ENCODE measurements at regions of chr2 and their contacts with region 1.

Region 1: DNA sequence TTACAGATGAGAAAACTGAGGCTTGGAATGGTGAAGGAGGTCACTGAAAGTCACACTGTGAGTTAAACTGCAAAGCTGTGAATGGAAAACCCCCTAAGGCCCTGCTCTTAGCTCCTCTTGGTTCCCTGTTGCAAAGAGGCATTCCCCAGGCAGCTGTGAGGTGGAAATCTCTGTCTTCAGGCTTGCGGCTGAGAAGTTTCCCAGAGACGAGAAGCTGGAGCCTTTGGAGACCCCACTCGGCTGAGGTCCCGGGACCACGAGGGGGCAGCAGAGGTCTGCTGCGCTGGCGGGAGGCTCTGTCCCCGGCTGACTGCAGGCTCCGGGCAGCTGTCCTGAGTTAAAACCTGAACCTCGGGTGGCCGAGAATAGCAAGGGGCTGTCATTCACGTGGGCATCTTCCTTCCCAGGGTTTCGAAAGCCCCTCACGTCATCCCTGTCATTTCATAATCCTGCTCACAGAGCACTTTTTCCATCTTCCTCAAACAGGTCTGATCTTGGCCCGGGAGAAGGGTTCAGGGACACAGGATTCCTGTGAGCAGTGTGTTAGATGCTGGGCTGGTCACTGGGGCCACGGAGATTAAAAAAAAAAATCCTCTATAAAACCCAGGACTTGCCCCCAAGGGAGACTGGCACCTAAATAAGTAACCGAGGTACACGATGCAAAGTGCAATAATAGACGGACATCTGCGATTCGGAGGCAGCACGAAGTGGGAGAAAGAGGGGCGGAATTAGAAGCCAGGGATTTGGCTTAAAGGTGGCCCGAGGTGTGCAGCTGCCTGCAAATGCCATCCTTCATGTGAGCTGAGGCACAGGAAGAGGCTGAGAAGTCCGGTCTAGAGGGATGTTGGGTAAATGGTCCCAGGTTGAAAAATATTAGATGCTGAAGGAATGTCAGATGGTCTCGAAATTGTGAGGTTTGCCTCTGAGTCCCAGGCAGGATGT is 24.6 kb upstream of the ATOH8 start:
- DNase-seq: peak; percentile 44 to 78
- H3K4me3 ChIP-seq: no peak overlapping the region
- H3K27ac ChIP-seq: no peak overlapping the region
- H3K4me1 ChIP-seq: no peaks in the 10 kb centered on the region; the same call in 1 of the 2 replicates
- H3K27me3 ChIP-seq: no peaks in the 10 kb centered on the region
- CTCF ChIP-seq: peak; percentile 90

Region 2: GRCh38 chr2:85635636-85636035 is 93.5 kb before region 1 on chr2:
- CTCF ChIA-PET with region 1: interaction called, 8 read pairs
- POLR2A ChIA-PET with region 1: no interaction called
- intact Hi-C with region 1: loop called (anchors 5 kb)
- DNase-seq: no peak
- H3K4me3 ChIP-seq: no peak overlapping the region
- H3K27ac ChIP-seq: no peak overlapping the region
- H3K4me1 ChIP-seq: no peaks in the 10 kb centered on the region
- H3K27me3 ChIP-seq: no peaks in the 10 kb centered on the region
- CTCF ChIP-seq: no peak

Region 3: DNA sequence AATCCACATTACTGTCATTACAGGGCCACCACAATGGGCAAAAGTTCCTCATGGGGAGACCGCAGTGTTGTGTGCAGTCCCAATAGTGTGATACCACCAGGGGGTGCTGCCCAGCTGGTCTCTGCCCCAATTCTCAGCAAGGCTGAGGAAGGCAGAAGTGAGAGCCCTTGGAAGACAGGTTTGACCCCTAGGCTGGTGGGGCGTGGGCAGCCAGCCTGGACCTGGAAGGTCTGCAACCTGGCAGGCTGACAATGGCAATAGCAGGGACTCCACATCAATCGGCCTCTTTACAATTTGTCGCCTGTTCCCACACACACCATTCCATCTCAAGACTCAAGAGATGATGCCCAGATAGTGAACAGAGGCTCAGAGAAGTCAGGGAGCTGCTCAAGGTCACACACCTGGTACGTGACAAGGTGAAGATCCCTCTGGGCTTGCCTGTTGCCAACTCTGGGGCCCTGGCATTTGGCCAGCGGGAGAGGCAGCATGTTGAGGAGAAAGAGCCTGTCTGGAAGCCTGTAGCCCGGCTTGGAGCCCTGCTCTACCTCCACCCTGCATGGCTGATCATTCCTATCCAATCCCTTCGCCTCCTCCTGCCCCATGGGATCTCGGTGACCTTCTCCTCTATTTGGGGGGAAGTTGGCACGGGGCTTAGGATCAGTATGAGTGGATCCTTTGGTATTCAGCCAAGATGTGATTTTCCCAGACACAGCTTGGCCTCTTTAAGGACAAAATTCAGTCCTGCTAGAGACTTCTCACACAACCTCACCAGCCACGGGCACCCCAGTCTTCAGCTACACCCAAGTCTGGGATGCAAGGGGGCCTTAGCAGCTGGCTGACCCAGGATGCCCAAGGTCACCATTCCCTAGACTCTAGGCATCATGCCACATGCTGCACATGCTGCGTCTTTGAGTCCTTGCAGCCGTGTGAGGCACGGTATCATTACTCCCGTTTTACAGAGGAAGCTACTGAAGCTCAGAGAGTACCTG is 21.7 kb after region 1 on chr2:
- CTCF ChIA-PET with region 1: interaction called, 3 read pairs
- POLR2A ChIA-PET with region 1: no interaction called
- intact Hi-C with region 1: loop called (anchors 1 kb)
- DNase-seq: peak in 1 of 2 experiments; percentile 66
- H3K4me3 ChIP-seq: no peak overlapping the region
- H3K27ac ChIP-seq: no peak overlapping the region
- H3K4me1 ChIP-seq: no peaks in the 10 kb centered on the region
- H3K27me3 ChIP-seq: peaks cover 81% of the 10 kb centered on the region
- CTCF ChIP-seq: peak; percentile 83

Region 4: GRCh38 chr2:85813982-85814801 is 85.0 kb after region 1 on chr2:
- CTCF ChIA-PET with region 1: interaction called, 15 read pairs
- POLR2A ChIA-PET with region 1: no interaction called
- intact Hi-C with region 1: loop called (anchors 1 kb)
- DNase-seq: peak; percentile 64 to 88
- H3K4me3 ChIP-seq: no peak overlapping the region
- H3K27ac ChIP-seq: no peak overlapping the region
- H3K4me1 ChIP-seq: no peaks in the 10 kb centered on the region
- H3K27me3 ChIP-seq: no peaks in the 10 kb centered on the region
- CTCF ChIP-seq: peak; percentile 95

Measured in PC-9 (cell line).